ENCODE measurements at regions of chr1 and their contacts with region 1.

Region 1: DNA sequence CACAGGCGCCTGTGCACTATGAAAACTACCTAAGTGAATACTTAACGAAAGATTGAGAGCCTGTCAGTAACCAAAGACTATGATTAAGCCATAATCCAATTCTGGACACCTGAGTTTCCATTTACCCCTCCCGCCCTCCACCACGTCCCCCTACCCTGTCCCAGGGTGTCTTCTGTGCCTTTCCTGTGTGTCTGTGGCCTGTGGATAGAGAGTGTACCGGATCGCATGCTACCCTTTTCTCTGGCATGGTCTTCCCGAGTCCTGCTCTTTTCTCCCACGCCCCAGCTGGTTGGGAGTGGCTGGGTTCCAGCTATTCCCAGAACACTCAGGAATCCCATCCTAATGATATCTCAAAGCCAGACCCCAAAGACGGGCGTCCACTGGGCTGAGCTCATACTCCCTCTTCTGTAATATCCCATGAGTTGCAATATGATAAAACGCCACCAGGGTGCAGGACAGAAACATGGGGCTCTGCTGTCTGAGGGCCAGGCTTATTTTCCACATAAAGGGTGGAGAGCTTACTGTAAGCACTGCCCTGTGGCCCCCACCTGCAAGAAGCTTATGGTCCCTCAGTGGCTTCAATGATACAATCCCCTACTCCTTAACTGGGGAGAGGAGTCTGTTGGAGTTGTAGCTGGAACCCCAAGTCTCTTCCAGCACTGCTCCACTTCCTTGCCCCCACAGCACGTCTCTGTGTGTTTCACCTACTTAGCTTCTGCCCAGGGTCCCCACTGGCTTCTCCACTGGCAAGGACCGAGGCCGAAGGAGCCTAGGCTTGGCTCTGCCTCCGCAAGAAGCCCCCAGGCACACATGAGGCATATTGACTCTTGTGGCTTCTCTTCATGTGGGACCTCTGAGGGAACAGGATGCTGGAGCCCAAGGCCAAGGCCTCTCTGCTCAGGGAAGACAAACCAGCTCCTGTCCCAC is 17.6 kb upstream of the ALX3 start:
- DNase-seq: peak; percentile 69
- ATAC-seq: peak; percentile 66
- H3K4me3 Mint-ChIP-seq: no peak overlapping the region
- H3K27ac Mint-ChIP-seq: no peak overlapping the region
- H3K4me1 Mint-ChIP-seq: peaks cover 13% of the 10 kb centered on the region
- H3K27me3 Mint-ChIP-seq: peaks cover 42% of the 10 kb centered on the region

Region 2: GRCh38 chr1:109975718-109976117 is 112.4 kb before region 1 on chr1:
- CTCF ChIA-PET with region 1: no interaction called
- POLR2A ChIA-PET with region 1: no interaction called
- intact Hi-C with region 1: no loop called
- DNase-seq: no peak
- ATAC-seq: no peak
- H3K4me3 Mint-ChIP-seq: no peak overlapping the region
- H3K27ac Mint-ChIP-seq: no peak overlapping the region
- H3K4me1 Mint-ChIP-seq: no peaks in the 10 kb centered on the region
- H3K27me3 Mint-ChIP-seq: peaks cover 4% of the 10 kb centered on the region

Region 3: GRCh38 chr1:110053557-110054428 is 34.3 kb before region 1 on chr1:
- CTCF ChIA-PET with region 1: interaction called, 43 read pairs
- POLR2A ChIA-PET with region 1: interaction called, 3 read pairs
- intact Hi-C with region 1: no loop called
- DNase-seq: peak; percentile 83
- ATAC-seq: peak; percentile 88
- H3K4me3 Mint-ChIP-seq: no peak overlapping the region
- H3K27ac Mint-ChIP-seq: no peak overlapping the region
- H3K4me1 Mint-ChIP-seq: no peaks in the 10 kb centered on the region
- H3K27me3 Mint-ChIP-seq: no peaks in the 10 kb centered on the region

Region 4: DNA sequence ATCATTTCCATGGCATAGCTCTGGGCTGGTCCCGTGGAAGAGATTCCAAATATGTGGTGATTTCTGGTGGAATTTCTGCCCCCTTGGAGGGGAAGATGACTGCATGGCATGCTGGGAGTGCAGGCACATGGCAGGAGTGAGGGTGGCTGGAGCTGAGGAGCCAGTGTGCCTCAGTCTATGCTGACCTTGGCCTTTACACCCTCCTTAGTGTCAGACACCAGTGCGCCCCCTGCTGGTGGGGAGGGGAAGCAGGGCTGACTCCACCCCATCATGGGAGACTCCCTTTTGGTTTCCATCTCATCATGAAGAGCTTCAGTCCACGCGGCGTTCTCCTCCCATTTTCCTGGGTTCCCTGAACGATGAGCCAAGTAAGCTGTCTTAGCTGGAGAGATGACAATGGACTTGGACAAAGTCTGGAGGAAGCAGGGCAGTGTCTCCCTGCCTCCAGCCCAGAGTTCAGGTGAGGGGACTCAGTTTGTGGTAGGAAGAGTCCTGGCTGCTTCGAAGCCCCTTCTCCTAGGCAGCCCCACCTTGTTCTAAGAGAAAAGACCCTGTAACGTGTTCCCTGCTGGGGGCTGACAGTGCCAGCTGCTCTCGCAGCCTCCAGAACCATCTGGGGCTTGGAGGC is 27.9 kb before region 1 on chr1:
- CTCF ChIA-PET with region 1: interaction called, 43 read pairs
- POLR2A ChIA-PET with region 1: no interaction called
- intact Hi-C with region 1: no loop called
- DNase-seq: peak; percentile 89
- ATAC-seq: peak; percentile 94
- H3K4me3 Mint-ChIP-seq: no peak overlapping the region
- H3K27ac Mint-ChIP-seq: no peak overlapping the region
- H3K4me1 Mint-ChIP-seq: no peaks in the 10 kb centered on the region
- H3K27me3 Mint-ChIP-seq: no peaks in the 10 kb centered on the region

Region 5: GRCh38 chr1:110068646-110069403 is 19.2 kb before region 1 on chr1:
- CTCF ChIA-PET with region 1: interaction called, 6 read pairs
- POLR2A ChIA-PET with region 1: interaction called, 3 read pairs
- intact Hi-C with region 1: loop called (anchors 1 to 2 kb)
- DNase-seq: peak; percentile 49
- ATAC-seq: peak; percentile 34
- H3K4me3 Mint-ChIP-seq: peak overlapping the region; percentile 15
- H3K27ac Mint-ChIP-seq: no peak overlapping the region
- H3K4me1 Mint-ChIP-seq: peaks cover 17% of the 10 kb centered on the region
- H3K27me3 Mint-ChIP-seq: peaks cover 57% of the 10 kb centered on the region

Region 6: DNA sequence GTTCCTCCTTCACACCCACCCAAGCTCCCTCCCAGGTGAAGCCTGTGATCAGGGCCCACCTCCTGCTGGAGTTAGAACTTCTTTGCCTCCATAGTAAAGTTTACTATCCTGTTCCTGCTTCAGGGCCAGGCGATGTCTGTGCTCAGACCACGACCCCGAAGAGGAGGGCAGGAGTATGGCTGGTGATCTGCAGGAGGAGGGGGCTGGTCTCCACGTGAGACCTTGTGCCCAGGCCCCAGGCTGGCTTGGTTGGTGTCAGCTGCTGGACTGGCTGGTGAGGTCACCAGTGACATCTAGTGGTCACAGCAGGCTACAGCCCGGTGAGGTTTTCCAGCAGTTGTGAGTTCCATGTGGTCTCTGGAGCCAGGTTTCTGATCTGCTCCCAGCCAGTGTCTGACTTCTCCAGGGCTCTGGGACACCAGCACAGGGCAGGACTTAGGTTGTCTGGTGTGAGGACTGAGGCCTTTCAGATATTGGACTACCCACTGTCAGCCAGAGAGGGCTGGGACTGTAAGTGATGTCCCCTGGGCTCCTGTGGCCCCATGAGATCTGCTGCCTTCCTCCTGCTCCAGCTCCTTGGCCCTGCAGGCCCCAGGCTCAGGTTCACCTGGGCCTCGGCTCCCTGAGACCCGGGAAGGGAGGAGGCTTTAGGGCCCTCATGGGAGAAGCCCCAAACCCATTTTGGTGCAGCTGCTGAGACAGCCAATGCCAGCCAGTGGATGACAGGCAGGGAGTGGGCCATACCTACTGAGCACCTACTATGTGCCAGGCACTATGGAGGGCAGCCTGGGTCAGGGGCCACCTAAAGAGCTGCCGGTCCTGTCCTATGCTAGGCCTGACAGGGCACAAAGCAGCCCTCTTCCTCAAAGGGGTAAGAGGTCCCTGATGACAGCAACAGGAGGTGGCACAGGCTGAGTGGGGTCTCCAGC is 18.2 kb after region 1 on chr1:
- CTCF ChIA-PET with region 1: interaction called, 128 read pairs
- POLR2A ChIA-PET with region 1: no interaction called
- intact Hi-C with region 1: loop called (anchors 1 kb)
- DNase-seq: peak; percentile 78
- ATAC-seq: peak; percentile 98
- H3K4me3 Mint-ChIP-seq: no peak overlapping the region
- H3K27ac Mint-ChIP-seq: no peak overlapping the region
- H3K4me1 Mint-ChIP-seq: no peaks in the 10 kb centered on the region
- H3K27me3 Mint-ChIP-seq: peaks cover 6% of the 10 kb centered on the region

Region 7: GRCh38 chr1:110118636-110119615 is 30.9 kb after region 1 on chr1:
- CTCF ChIA-PET with region 1: interaction called, 12 read pairs
- POLR2A ChIA-PET with region 1: no interaction called
- intact Hi-C with region 1: no loop called
- DNase-seq: peak; percentile 68
- ATAC-seq: peak; percentile 95
- H3K4me3 Mint-ChIP-seq: no peak overlapping the region
- H3K27ac Mint-ChIP-seq: no peak overlapping the region
- H3K4me1 Mint-ChIP-seq: peaks cover 5% of the 10 kb centered on the region
- H3K27me3 Mint-ChIP-seq: peaks cover 13% of the 10 kb centered on the region

Measured in activated CD4-positive, alpha-beta T cell treated with anti-CD3 and anti-CD28 coated beads for 36 hours (primary cell).